Activated CD4-positive, alpha-beta T cell treated with anti-CD3 and anti-CD28 coated beads, Interleukin-2, amount 10 ng/mL, durations not matched to agents 24 days and 14 days (primary cell): ENCODE measurements at regions of chr5 and their contacts with region 1.

Region 1: DNA sequence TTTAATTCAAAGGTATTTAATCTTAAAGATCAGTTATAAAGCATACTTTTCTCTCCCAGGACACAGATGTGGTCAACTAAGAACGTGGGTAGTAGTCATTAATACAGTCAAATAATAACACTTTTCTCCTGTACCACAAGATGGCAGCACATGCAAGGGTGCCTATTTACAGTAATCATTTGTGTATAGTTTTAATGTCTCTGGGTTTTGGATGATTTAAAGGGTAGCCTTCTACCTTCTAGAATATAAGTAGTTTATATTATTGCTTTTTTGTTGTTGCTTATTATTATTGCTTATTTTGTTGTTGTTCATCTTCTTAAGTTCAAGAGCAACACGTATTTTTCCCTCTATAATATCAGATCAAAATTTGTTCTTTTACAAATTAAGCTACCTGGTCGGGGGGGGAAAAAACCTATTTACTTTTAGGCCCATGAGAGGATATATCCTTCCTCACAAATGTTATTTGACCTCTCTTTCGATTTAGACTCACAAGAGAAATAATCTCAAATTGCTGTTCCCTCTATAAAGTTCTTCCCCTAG is 59.6 kb upstream of the SLC27A6 start:
- DNase-seq: peak; percentile 74
- H3K4me3 Mint-ChIP-seq: no peak overlapping the region
- H3K27ac Mint-ChIP-seq: no peak overlapping the region
- H3K4me1 Mint-ChIP-seq: no peaks in the 10 kb centered on the region
- H3K27me3 Mint-ChIP-seq: no peaks in the 10 kb centered on the region

Region 2: DNA sequence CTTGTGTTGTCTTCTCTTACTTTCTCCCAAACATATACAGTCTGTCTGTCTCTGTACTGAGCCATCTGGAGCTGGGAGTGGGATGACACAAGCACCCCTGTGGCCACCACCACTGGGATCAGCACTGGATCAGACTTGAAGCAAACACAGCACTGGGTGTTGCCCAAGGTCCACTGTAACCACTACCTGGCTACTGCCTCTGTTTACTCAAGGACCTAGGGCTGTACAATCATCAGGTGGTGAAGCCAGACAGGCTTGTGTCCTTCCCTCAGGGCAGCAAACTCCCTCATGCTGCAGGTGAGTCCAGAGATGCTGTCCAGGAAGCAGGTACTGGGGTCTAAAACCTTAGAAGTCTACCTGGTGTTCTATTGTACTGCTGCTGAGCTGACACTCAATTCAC is 10.1 kb before region 1 on chr5:
- intact Hi-C with region 1: no loop called
- DNase-seq: no peak
- H3K4me3 Mint-ChIP-seq: no peak overlapping the region
- H3K27ac Mint-ChIP-seq: no peak overlapping the region
- H3K4me1 Mint-ChIP-seq: no peaks in the 10 kb centered on the region
- H3K27me3 Mint-ChIP-seq: no peaks in the 10 kb centered on the region

Region 3: DNA sequence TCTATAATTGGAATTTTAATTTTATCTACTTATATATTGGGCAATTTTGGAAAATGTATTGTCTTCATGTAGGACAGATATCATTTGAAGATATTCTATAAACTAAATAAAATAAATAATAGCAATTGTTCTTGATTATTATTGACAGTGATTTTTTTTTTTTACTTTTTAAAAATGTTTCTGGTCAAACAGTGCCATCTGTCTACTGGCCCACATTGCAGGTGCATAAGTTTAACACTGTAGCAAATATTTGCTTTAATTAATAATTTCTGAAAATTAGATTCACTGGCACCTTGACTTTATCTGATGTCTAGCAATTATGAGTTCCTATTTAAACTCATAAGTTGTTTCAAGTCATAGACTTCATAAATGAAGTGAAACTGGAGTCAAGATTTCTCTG is 147.8 kb after region 1 on chr5:
- intact Hi-C with region 1: no loop called
- DNase-seq: no peak
- H3K4me3 Mint-ChIP-seq: no peak overlapping the region
- H3K27ac Mint-ChIP-seq: no peak overlapping the region
- H3K4me1 Mint-ChIP-seq: no peaks in the 10 kb centered on the region
- H3K27me3 Mint-ChIP-seq: no peaks in the 10 kb centered on the region

Region 4: GRCh38 chr5:129135633-129136032 is 230.0 kb after region 1 on chr5:
- intact Hi-C with region 1: loop called (anchors 2 kb)
- DNase-seq: peak; percentile 65
- H3K4me3 Mint-ChIP-seq: no peak overlapping the region
- H3K27ac Mint-ChIP-seq: no peak overlapping the region
- H3K4me1 Mint-ChIP-seq: no peaks in the 10 kb centered on the region
- H3K27me3 Mint-ChIP-seq: peaks cover 2% of the 10 kb centered on the region

Region 5: GRCh38 chr5:129746876-129747275 is 841.2 kb after region 1 on chr5:
- intact Hi-C with region 1: no loop called
- DNase-seq: no peak
- H3K4me3 Mint-ChIP-seq: no peak overlapping the region
- H3K27ac Mint-ChIP-seq: no peak overlapping the region
- H3K4me1 Mint-ChIP-seq: no peaks in the 10 kb centered on the region
- H3K27me3 Mint-ChIP-seq: no peaks in the 10 kb centered on the region

Region 6: DNA sequence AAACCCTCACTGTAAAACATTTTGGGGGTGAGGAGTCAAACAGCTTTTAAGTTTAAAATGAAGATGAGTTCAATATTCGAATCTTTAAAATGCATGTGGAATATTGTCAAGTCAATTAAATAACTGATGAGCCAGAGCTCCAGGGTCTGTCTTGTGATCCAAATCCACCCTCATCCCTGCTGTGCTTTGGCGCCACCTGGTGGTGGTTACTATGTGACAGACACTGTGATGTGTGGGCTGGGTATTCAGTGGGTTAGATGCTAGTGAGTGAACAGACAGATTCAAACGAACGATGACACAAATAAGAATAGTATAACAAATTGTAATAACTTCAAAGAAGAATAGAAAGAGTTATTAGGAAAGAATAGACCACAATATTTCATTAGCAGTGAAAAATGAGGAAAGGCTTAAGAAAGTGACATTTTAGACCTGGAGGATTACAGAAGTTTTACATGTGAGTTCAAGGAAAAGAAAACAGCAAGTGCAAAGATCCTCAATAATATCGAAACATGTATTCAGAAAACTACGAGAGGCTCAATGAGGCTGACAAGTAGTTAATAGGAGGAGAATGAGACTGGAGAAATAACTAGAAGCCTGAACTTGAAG is 947.2 kb after region 1 on chr5:
- intact Hi-C with region 1: loop called (anchors 2 kb)
- DNase-seq: peak; percentile 89
- H3K4me3 Mint-ChIP-seq: no peak overlapping the region
- H3K27ac Mint-ChIP-seq: no peak overlapping the region
- H3K4me1 Mint-ChIP-seq: no peaks in the 10 kb centered on the region
- H3K27me3 Mint-ChIP-seq: no peaks in the 10 kb centered on the region